ENCODE measurements at regions of chr7 and their contacts with region 1.

Region 1: DNA sequence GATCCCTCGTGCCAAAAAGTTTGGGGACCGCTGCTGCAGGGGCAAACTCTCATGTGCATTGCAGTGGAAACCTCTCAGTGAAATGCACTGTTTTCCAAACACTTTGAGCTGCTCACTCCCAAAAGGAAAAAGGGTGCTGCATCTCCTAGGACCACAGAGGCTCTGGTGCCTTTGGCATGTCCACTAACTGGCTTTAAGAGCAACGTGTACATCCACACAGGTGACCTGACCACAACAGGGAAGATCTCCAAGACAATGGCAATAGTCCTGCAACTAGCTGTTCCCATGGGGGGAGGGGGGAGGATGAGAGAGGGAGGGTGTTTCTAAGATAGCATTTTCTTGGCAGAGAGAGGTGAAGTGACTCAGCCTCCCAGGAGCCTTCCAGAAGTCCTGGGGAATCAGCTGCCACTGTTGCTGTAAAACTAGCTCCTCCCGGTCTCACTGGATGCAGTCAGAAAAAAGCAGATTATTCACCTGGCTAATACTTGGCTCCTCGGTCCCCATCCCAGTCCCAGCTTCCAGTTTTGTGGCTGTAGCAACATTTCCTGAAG is 181.7 kb downstream of the HECW1 start:
- DNase-seq: peak in 1 of 4 experiments; percentile 6
- ATAC-seq: no peak
- H3K4me3 ChIP-seq: no peak overlapping the region
- H3K27ac ChIP-seq: no peak overlapping the region
- H3K4me1 ChIP-seq: no peaks in the 10 kb centered on the region
- H3K27me3 ChIP-seq: peaks cover 0 to 25% of the 10 kb centered on the region in 2 experiments; a peak in 3 of 5 replicates
- CTCF ChIP-seq: no peak
- EP300 ChIP-seq: no peak
- POLR2A ChIP-seq: no peak
- RAD21 ChIP-seq: no peak

Region 2: DNA sequence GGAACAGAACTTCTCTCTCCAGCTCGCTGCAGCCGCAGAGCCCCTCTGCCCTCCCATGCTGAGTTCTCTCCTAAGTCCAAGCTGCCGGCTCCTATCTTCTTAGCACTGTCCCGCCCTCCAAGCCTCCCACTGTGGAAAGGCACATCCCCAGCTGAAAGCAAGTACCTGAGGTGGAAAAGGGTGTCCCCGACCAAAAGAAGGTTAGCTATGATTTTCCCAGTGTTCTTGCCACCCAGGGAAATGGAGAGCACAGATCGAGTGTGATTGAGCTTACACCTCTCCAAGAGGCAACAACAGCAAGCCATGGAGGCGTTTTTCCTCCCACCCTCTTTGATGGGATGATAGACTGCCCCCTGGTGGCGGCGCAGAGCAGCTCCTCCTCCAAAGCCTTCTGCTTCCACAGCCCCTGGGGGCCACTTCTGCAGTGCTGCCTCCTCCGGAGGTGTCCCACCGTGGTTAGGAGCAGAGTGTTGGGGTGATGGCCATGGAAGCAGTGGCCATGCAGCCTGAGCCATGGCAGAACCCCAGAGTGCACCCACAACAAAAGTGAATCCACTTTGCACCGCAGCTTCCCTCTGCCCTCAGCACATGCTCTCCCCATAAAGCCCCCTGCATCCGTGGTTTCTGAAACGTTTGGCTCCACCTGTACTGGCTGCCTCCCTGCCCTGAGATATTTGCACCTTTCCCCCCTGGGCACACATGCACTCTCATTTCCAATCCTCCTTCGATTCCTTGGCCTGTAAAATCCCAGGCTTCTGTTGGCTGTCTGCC is 145.7 kb after region 1 on chr7:
- CTCF ChIA-PET with region 1: no interaction called
- POLR2A ChIA-PET with region 1: no interaction called
- in situ Hi-C with region 1: no loop called
- intact Hi-C with region 1: loop called (anchors 10 kb)
- DNase-seq: peak; percentile 70 to 82 (median 80)
- ATAC-seq: peak; percentile 98
- H3K4me3 ChIP-seq: no peak overlapping the region
- H3K27ac ChIP-seq: no peak overlapping the region
- H3K4me1 ChIP-seq: peaks cover 0 to 8% of the 10 kb centered on the region in 2 experiments; a peak in 1 of 5 replicates
- H3K27me3 ChIP-seq: peaks cover 19 to 20% of the 10 kb centered on the region in 2 experiments
- CTCF ChIP-seq: peak; percentile 89 to 94 (median 90)
- EP300 ChIP-seq: no peak
- POLR2A ChIP-seq: no peak
- RAD21 ChIP-seq: peak; percentile 51 to 81